ENCODE measurements at regions of chr2 and their contacts with region 1.

Region 1: GRCh38 chr2:215787025-215787424 is 226.3 kb downstream of the MREG start:
- DNase-seq: no peak
- H3K4me3 ChIP-seq: no peak overlapping the region
- H3K27ac ChIP-seq: no peak overlapping the region
- H3K4me1 ChIP-seq: no peaks in the 10 kb centered on the region
- H3K27me3 ChIP-seq: no peaks in the 10 kb centered on the region
- CTCF ChIP-seq: no peak
- POLR2A ChIP-seq: no peak

Region 2: GRCh38 chr2:214310319-214310718 is 1476.7 kb before region 1 on chr2:
- intact Hi-C with region 1: no loop called
- DNase-seq: no peak
- H3K4me3 ChIP-seq: no peak overlapping the region
- H3K27ac ChIP-seq: no peak overlapping the region
- H3K4me1 ChIP-seq: no peaks in the 10 kb centered on the region
- H3K27me3 ChIP-seq: no peaks in the 10 kb centered on the region
- CTCF ChIP-seq: no peak
- POLR2A ChIP-seq: no peak

Region 3: DNA sequence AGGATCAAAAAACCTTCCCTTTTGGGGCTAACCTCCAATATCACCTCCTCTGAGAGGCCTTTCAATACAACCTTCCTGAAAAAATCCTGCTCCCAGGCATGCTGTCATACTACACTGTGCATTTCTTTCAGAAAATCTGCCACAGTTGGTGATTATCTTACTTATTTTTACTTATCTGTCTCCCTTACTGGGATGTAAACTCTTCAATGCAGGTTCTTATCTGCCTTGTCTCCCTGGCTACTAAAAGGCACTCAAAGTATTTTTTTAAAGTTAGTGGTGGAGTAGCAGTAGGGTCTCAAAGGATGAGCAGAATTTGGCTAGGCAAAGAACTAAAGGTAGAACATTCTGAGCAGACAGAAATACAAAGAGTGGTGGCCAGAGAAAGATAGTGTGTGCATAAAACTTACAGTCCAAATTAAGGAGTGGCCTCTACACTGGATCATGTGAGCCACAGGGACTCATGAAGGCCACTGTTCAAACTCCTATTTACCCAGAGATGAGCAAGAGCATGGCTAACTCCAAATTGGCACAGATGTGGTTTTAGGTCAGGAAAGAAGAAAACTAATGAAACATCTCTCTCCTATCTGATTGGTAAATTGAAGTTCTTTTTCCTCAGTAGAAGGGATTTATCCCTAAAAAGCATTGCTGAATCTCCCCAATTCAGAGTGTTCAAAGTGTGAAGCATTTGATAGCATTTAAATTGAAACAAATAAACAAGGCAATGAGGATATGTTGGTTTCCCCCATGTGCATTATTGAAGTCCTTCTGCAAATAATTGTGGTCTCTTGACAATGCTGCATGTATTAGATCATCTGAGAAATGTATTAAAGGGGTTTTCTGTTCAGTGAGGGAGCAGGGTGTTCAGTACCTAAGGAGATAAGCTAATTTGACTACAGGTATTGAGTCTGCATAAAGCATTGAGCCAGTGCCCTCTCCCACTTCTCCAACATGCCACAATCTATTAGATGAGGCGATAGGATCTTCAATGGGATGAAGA is 59.2 kb before region 1 on chr2:
- intact Hi-C with region 1: no loop called
- DNase-seq: no peak
- H3K4me3 ChIP-seq: no peak overlapping the region
- H3K27ac ChIP-seq: no peak overlapping the region
- H3K4me1 ChIP-seq: no peaks in the 10 kb centered on the region
- H3K27me3 ChIP-seq: no peaks in the 10 kb centered on the region
- CTCF ChIP-seq: no peak
- POLR2A ChIP-seq: no peak

Region 4: DNA sequence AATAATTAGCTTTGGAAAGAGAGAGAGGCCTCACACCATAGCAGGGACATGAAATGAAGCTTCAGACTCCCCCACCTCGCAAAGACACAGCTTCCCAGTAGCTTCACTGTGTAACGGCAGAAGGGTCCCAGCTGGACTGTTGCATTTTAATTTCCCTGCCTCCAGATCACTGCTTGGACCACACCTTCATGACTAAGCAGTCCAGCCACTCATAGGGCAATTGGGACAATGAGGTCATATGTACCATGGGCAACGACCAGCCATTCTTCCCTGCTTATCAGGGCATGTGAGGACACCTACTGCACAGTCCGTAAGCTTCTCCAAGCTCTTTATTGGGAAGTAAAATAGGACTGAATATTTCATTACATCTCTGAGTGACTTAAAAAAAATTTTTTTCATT is 43.3 kb after region 1 on chr2:
- intact Hi-C with region 1: loop called (anchors 2 kb)
- DNase-seq: no peak
- H3K4me3 ChIP-seq: no peak overlapping the region
- H3K27ac ChIP-seq: no peak overlapping the region
- H3K4me1 ChIP-seq: no peaks in the 10 kb centered on the region
- H3K27me3 ChIP-seq: no peaks in the 10 kb centered on the region
- CTCF ChIP-seq: no peak
- POLR2A ChIP-seq: no peak

Region 5: GRCh38 chr2:216936954-216937357 is 1149.9 kb after region 1 on chr2:
- intact Hi-C with region 1: no loop called
- DNase-seq: no peak
- H3K4me3 ChIP-seq: no peak overlapping the region
- H3K27ac ChIP-seq: no peak overlapping the region
- H3K4me1 ChIP-seq: no peaks in the 10 kb centered on the region
- H3K27me3 ChIP-seq: no peaks in the 10 kb centered on the region
- CTCF ChIP-seq: no peak
- POLR2A ChIP-seq: no peak

Measured in breast epithelium (tissue), 4 donors.